CD14-positive monocyte (primary cell): ENCODE measurements at regions of chr17 and their contacts with region 1.

Region 1: DNA sequence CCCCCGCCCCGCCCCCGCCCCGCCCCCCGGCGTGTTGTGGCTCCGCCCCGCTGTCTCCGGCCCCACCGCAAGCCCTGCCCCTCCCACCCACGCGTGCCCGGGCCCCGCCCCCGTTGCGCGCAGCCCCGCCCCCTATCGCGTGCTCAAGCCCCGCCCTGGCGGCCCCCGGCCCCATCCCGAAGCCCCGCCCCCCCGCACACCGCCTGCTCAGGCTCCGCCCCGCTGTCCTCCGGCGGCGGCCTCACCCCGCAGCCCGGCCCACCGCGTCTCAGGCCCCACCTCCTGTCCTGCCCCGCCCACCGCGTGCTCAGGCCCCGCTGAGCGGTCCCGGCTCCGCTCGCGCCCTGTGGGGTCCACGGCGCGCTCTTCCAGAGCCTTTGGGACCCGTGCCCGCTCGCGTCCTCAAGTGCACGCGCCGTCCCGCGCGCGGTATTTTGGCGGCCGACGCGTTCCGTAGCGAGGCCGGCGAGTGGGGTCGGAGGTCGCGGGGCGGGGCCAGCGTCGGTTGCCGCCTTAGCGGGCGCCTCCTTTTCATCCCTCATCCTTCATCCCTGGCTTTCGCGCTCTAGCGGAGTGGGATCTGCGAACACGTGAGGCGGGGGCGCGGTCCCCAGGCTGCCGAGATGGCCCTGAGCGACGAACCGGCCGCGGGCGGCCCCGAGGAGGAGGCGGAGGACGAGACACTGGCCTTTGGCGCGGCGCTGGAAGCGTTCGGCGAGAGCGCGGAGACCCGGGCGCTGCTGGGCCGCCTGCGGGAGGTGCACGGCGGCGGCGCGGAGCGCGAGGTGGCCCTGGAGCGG is at the start of gene TBCD:
- DNase-seq: peak; percentile 60 to 84 (median 70)
- H3K4me3 ChIP-seq: peak within 1 kb of the TSS; percentile 49 to 85 (median 67)
- H3K4me3 Mint-ChIP-seq: peak within 1 kb of the TSS; percentile 83 to 87
- H3K27ac ChIP-seq: peak within 1 kb of the TSS in 1 of 2 donors; percentile 75
- H3K27ac Mint-ChIP-seq: peak within 1 kb of the TSS in 5 of 7 donors; percentile 26 to 81 (median 57)
- H3K4me1 ChIP-seq: peaks cover 10 to 15% of the 10 kb centered on the region in 2 donors
- H3K4me1 Mint-ChIP-seq: peaks cover 25% of the 10 kb centered on the region
- H3K27me3 ChIP-seq: peaks cover 0 to 8% of the 10 kb centered on the region in 2 donors
- H3K27me3 Mint-ChIP-seq: peaks cover 1 to 27% (median 7%) of the 10 kb centered on the region in 3 donors
- CTCF ChIP-seq: no peak
- polyA plus RNA-seq, gene TBCD: 54.7 to 74.0 (median 66.6) TPM

Region 2: GRCh38 chr17:82698065-82698973 is 53.5 kb before region 1 on chr17 and contains the start of gene RAB40B:
- intact Hi-C with region 1: loop called in 1 of 2 experiments (anchors 5 kb)
- DNase-seq: peak; percentile 98
- H3K4me3 ChIP-seq: peak within 1 kb of the TSS; percentile 32 to 73 (median 48)
- H3K4me3 Mint-ChIP-seq: peak within 1 kb of the TSS; percentile 75 to 92
- H3K27ac ChIP-seq: no peak within 1 kb of the TSS
- H3K27ac Mint-ChIP-seq: peak within 1 kb of the TSS in 3 of 7 donors; percentile 26 to 78 (median 70)
- H3K4me1 ChIP-seq: peaks cover 13 to 20% of the 10 kb centered on the region in 2 donors
- H3K4me1 Mint-ChIP-seq: peaks cover 9% of the 10 kb centered on the region
- H3K27me3 ChIP-seq: peaks cover 9 to 20% of the 10 kb centered on the region in 2 donors
- H3K27me3 Mint-ChIP-seq: peaks cover 23 to 31% (median 28%) of the 10 kb centered on the region in 3 donors
- CTCF ChIP-seq: no peak
- polyA plus RNA-seq, gene RAB40B: 0.75 to 2.2 (median 0.95) TPM

Region 3: DNA sequence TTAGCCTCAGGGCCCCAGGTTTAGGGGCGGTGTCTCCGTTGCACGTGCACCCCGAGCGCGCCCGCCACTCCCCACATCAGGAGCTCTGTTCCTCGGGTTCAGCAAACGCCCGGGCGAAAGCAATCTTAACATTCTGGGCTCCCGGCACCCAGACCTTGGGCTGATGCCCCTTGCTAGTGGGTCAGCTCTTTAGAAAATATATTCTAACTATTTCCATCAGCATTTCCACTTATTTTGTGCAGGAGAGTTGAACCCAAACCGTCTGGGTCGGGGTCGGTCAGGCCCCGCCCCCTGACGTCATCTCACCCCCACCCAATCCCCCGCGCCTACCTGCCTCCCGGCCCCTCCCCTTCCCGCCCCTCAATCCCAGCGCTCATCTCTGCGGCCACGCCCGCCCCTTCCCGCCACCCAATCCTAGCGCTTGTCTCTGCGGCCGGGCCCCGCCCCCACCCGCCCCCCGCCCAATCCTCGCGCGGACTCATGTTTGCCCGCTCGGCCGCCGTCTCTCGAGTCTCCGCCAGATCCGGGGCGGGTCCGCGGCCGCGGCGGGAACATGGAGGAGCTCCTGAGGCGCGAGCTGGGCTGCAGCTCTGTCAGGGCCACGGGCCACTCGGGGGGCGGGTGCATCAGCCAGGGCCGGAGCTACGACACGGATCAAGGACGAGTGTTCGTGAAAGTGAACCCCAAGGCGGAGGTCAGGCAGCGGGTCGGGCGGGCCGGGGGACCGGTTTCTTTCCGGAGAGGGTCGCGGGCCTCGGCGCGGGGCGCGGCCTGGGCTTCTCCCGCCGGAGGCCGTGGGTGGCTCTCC is 35.4 kb before region 1 on chr17 and contains the start of gene FN3KRP:
- intact Hi-C with region 1: loop called in 1 of 2 experiments (anchors 5 kb)
- DNase-seq: peak; percentile 88 to 93 (median 93)
- H3K4me3 ChIP-seq: peak within 1 kb of the TSS; percentile 69 to 88 (median 84)
- H3K4me3 Mint-ChIP-seq: peak within 1 kb of the TSS; percentile 96 to 98
- H3K27ac ChIP-seq: peak within 1 kb of the TSS in 1 of 2 donors; percentile 59
- H3K27ac Mint-ChIP-seq: peak within 1 kb of the TSS; percentile 70 to 92 (median 77)
- H3K4me1 ChIP-seq: peaks cover 17 to 20% of the 10 kb centered on the region in 2 donors
- H3K4me1 Mint-ChIP-seq: peaks cover 20% of the 10 kb centered on the region
- H3K27me3 ChIP-seq: no peaks in the 10 kb centered on the region
- H3K27me3 Mint-ChIP-seq: peaks cover 2 to 10% (median 4%) of the 10 kb centered on the region in 3 donors
- CTCF ChIP-seq: no peak
- polyA plus RNA-seq, gene FN3KRP: 16.5 to 24.8 (median 23.2) TPM

Region 4: DNA sequence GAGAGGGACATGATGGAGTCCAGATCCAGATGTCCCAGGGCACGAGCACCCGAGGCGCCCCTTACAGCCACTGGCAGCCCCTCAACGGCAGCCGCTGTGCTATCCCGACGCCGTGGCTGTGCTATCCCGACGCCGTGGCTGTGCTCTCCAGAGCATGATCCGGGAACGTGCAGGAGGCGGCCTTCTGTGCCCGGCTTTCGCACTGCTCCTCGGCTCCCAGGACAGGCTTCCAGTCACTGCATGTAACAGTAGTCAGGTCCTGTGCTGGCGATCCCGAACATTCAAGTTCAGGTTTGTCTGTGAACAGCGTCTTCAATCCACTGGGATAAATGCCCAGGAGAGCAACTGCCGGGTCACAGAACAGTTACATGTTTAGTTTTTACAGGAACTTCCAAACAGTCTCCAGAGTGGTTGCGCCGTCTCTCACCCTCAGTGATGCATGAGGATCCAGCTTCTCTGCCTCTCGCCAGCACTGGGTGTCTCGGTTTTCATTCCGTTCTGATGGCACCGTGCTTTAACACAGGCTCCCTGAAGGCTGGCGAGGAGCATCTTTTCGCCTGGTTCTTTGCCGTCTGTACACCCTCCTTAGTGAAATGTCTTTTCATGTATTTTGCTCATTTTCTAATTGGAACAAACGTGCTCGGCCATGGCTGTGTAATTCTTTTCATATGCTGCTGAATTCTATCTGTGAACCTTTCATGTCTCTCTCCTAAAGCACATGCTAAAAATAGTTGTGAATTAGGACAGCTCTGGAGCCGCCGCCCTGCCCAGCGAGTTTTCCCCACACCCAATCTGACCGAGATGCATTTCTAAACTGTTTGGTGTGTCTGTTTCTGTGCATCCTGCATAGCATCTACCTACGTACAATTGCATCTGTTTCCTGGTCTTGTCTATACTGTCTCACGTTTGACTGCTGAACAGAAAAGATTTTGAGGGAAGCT is 255.0 kb after region 1 on chr17:
- intact Hi-C with region 1: no loop called
- DNase-seq: no peak
- H3K4me3 ChIP-seq: no peak overlapping the region
- H3K4me3 Mint-ChIP-seq: no peak overlapping the region
- H3K27ac ChIP-seq: no peak overlapping the region
- H3K27ac Mint-ChIP-seq: peak overlapping the region in 5 of 7 donors; percentile 2 to 41 (median 18)
- H3K4me1 ChIP-seq: no peaks in the 10 kb centered on the region
- H3K4me1 Mint-ChIP-seq: no peaks in the 10 kb centered on the region
- H3K27me3 ChIP-seq: no peaks in the 10 kb centered on the region
- H3K27me3 Mint-ChIP-seq: peaks cover 0 to 2% (median 2%) of the 10 kb centered on the region in 3 donors
- CTCF ChIP-seq: no peak